Prostate gland (tissue), 2 donors: ENCODE measurements at regions of chr5 and their contacts with region 1.

Region 1: GRCh38 chr5:137778772-137779564 is 24.8 kb upstream of the HNRNPA0 start:
- DNase-seq: no peak
- H3K4me3 ChIP-seq: no peak overlapping the region
- H3K27ac ChIP-seq: no peak overlapping the region
- H3K4me1 ChIP-seq: no peaks in the 10 kb centered on the region
- H3K27me3 ChIP-seq: no peaks in the 10 kb centered on the region
- CTCF ChIP-seq: peak in 3 of 4 experiments; percentile 77 to 86 (median 83)
- POLR2A ChIP-seq: no peak

Region 2: DNA sequence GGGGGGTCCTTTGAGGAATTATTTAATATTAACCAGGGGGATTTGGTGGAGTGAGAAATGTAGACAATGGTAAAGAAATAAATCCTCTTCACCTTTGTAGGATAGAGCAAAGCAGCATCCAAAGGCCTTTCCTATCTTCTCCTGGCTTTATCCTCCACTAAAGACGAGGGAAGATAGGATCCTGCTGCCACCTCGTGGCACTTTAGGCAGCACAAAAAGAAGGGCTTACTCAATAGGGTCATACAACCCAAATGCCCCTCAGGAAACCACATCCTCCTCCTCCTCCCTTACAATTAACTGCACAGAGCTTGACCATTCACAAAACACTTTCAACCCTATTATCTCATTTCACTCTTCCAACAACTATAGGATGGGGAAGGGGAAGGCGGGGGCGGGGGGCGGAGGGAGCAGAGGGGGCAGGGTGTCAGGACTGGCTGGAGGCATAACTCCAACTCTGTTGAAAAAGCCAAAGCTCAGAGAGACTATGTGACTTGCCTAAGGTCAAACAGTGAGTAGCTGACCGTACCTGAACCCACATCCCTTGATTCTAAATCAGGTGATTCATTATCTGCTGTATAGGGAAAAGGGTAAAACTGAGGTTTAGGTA is 43.3 kb after region 1 on chr5:
- intact Hi-C with region 1: loop called (anchors 2 kb)
- DNase-seq: peak; percentile 37
- H3K4me3 ChIP-seq: no peak overlapping the region
- H3K27ac ChIP-seq: no peak overlapping the region
- H3K4me1 ChIP-seq: no peaks in the 10 kb centered on the region
- H3K27me3 ChIP-seq: no peaks in the 10 kb centered on the region
- CTCF ChIP-seq: peak; percentile 14 to 59 (median 56)
- POLR2A ChIP-seq: no peak

Region 3: GRCh38 chr5:138065102-138065501 is 286.1 kb after region 1 on chr5:
- intact Hi-C with region 1: loop called (anchors 5 kb)
- DNase-seq: no peak
- H3K4me3 ChIP-seq: no peak overlapping the region
- H3K27ac ChIP-seq: no peak overlapping the region
- H3K4me1 ChIP-seq: no peaks in the 10 kb centered on the region
- H3K27me3 ChIP-seq: no peaks in the 10 kb centered on the region
- CTCF ChIP-seq: no peak
- POLR2A ChIP-seq: no peak